Gastrocnemius medialis (tissue), 4 donors: ENCODE measurements at regions of chr16 and their contacts with region 1.

Region 1: GRCh38 chr16:30519120-30520049 is 7.0 kb downstream of the ZNF768 start:
- DNase-seq: no peak
- ATAC-seq: no peak
- H3K4me3 ChIP-seq: no peak overlapping the region
- H3K27ac ChIP-seq: no peak overlapping the region
- H3K4me1 ChIP-seq: peaks cover 0 to 5% of the 10 kb centered on the region in 2 donors
- H3K27me3 ChIP-seq: no peaks in the 10 kb centered on the region
- CTCF ChIP-seq: no peak
- POLR2A ChIP-seq: no peak

Region 2: DNA sequence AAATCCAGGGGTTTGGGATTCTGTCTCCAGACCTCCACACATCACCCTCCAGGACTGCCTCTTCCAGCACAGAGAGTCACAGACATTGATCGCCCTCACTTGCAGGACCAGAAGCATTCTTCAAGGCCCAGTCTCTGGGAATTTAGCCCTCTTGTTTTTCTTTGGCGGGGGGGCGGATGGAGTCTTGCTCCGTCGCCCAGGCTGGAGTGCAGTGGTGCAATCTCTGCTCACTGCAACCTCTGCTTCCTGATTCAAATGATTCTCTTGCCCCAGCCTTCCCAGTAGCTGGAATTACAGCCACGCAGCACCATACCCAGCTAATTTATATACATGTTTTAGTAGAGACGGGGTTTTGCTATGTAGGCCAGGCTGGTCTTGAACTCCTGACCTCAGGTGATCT is 55.3 kb before region 1 on chr16:
- in situ Hi-C with region 1: loop called in 1 of 4 experiments (anchors 10 kb)
- intact Hi-C with region 1: no loop called
- DNase-seq: no peak
- ATAC-seq: no peak
- H3K4me3 ChIP-seq: no peak overlapping the region
- H3K27ac ChIP-seq: no peak overlapping the region
- H3K4me1 ChIP-seq: no peaks in the 10 kb centered on the region
- H3K27me3 ChIP-seq: no peaks in the 10 kb centered on the region
- CTCF ChIP-seq: no peak
- POLR2A ChIP-seq: no peak

Region 3: GRCh38 chr16:30499284-30499683 is 20.1 kb before region 1 on chr16:
- in situ Hi-C with region 1: no loop called
- intact Hi-C with region 1: no loop called
- DNase-seq: no peak
- ATAC-seq: no peak
- H3K4me3 ChIP-seq: peak overlapping the region in 1 of 4 donors; percentile 43
- H3K27ac ChIP-seq: no peak overlapping the region
- H3K4me1 ChIP-seq: no peaks in the 10 kb centered on the region
- H3K27me3 ChIP-seq: no peaks in the 10 kb centered on the region
- CTCF ChIP-seq: no peak
- POLR2A ChIP-seq: no peak

Region 4: GRCh38 chr16:30534368-30535105 is 15.2 kb after region 1 on chr16 and contains the start of gene ZNF747:
- in situ Hi-C with region 1: no loop called
- intact Hi-C with region 1: no loop called
- DNase-seq: peak; percentile 93 to 95
- ATAC-seq: peak; percentile 87 to 91
- H3K4me3 ChIP-seq: peak within 1 kb of the TSS; percentile 65 to 88 (median 82)
- H3K27ac ChIP-seq: peak within 1 kb of the TSS; percentile 90 to 96 (median 94)
- H3K4me1 ChIP-seq: peaks cover 23 to 24% of the 10 kb centered on the region in 2 donors
- H3K27me3 ChIP-seq: no peaks in the 10 kb centered on the region
- CTCF ChIP-seq: peak in 1 of 5 experiments; percentile 6
- POLR2A ChIP-seq: peak; percentile 71 to 74
- total RNA-seq, gene ZNF747: 8.6 to 17.5 (median 13.1) TPM

Region 5: DNA sequence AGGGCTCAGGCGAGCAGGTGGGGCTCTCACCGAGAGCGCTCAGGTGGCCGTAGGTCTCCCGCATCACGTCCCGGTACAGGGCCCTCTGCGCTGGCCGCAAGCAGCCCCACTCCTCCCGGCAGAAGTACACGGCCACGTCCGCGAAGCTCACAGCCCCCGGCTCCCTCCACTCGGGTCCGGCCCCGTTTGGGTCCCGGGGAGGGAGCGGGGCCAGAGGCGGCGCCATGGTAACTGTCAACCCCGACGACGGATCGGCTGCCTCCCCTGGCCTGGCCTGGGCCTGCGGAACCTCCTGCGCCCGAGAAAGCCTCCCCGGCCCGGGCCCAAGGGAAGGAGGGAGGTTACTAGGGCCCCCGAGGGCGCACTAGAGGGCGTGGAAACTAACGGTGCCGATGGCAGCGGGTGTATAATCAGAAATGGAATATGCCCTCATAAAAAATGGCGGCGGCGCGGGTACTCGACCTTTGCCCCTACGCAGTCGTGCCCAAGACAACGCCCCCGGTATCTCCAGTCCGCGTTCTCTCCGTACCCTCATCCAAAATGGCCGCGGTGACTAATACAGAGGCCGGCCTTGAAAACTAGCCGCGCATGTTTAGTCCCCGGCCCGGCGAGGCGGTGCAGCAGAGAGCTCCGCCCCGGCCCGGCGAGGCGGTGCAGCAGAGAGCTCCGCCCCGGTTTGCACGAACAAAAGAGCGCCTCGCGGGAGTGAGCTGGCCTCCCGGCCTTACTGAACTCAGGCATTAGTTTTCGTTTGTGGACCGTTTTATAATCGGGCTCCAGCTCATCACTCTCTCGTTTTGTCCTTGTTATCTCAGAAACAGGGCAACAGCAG is 38.8 kb after region 1 on chr16 and contains the start of gene ZNF764:
- in situ Hi-C with region 1: no loop called
- intact Hi-C with region 1: no loop called
- DNase-seq: peak; percentile 99
- ATAC-seq: peak; percentile 94 to 98
- H3K4me3 ChIP-seq: peak within 1 kb of the TSS; percentile 88 to 99 (median 98)
- H3K27ac ChIP-seq: peak within 1 kb of the TSS; percentile 95 to 99 (median 98)
- H3K4me1 ChIP-seq: peaks cover 22 to 28% of the 10 kb centered on the region in 2 donors
- H3K27me3 ChIP-seq: no peaks in the 10 kb centered on the region
- CTCF ChIP-seq: no peak
- POLR2A ChIP-seq: peak; percentile 49
- total RNA-seq, gene ZNF764: 3.7 to 5.5 (median 4.9) TPM